OCI-LY7 (cell line): ENCODE measurements at regions of chr22 and their contacts with region 1.

Region 1: DNA sequence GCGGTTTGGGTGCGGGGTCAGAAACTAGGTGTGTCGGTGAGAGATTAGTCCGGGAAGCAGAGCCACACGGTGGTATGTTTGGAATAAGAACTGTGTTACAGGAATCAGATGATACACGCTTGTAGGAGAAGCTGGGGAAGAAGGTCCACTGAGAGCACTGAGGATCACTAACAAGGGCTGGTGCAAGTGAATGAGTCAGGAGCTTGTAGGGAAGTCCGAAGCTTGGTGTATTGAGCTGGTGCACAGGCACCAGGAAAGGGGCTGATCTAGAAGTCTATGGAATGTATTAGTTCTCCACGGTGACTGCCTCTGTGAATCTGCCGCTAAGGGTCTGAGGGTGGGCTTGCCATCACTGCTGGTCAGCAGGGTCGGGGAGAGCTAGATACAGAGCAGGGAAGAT is 18.8 kb upstream of the GRK3 start:
- DNase-seq: no peak
- H3K4me3 ChIP-seq: no peak overlapping the region
- H3K27ac ChIP-seq: no peak overlapping the region
- H3K4me1 ChIP-seq: peaks cover 14% of the 10 kb centered on the region
- CTCF ChIP-seq: no peak

Region 2: GRCh38 chr22:25488244-25489020 is 57.2 kb before region 1 on chr22:
- CTCF ChIA-PET with region 1: no interaction called
- POLR2A ChIA-PET with region 1: no interaction called
- intact Hi-C with region 1: no loop called
- DNase-seq: no peak
- H3K4me3 ChIP-seq: no peak overlapping the region
- H3K27ac ChIP-seq: no peak overlapping the region
- H3K4me1 ChIP-seq: no peaks in the 10 kb centered on the region
- CTCF ChIP-seq: no peak

Region 3: GRCh38 chr22:25702040-25702439 is 156.4 kb after region 1 on chr22:
- CTCF ChIA-PET with region 1: no interaction called
- POLR2A ChIA-PET with region 1: interaction called, 3 read pairs
- intact Hi-C with region 1: loop called (anchors 2 kb)
- DNase-seq: peak; percentile 30
- H3K4me3 ChIP-seq: no peak overlapping the region
- H3K27ac ChIP-seq: no peak overlapping the region
- H3K4me1 ChIP-seq: peaks cover 3% of the 10 kb centered on the region
- CTCF ChIP-seq: peak; percentile 83

Region 4: DNA sequence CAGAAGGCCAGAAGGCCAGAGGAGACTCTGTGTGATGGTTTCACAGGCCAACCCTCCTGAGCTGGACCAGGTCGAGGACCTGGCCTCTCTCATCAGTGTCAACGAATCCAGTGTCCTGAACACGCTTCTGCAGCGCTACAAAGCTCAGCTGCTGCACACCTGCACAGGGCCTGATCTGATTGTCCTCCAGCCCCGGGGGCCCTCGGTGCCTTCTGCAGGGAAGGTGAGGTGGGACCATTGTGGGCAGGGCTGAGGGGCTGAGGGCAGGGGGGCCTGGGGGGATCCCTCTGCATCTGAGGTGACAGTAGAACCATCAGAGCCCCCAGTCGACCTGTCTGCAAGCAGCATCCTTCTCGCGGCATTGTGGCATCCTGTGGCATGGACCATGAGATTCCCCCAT is 226.6 kb after region 1 on chr22:
- CTCF ChIA-PET with region 1: no interaction called
- POLR2A ChIA-PET with region 1: no interaction called
- intact Hi-C with region 1: loop called (anchors 2 kb)
- DNase-seq: no peak
- H3K4me3 ChIP-seq: no peak overlapping the region
- H3K27ac ChIP-seq: no peak overlapping the region
- H3K4me1 ChIP-seq: no peaks in the 10 kb centered on the region
- CTCF ChIP-seq: no peak